Activated CD8-positive, alpha-beta T cell treated with anti-CD3 and anti-CD28 coated beads, Interleukin-2, amount 10 ng/mL, durations not matched to agents 7 days and 5 days (primary cell): ENCODE measurements at regions of chr20 and their contacts with region 1.

Region 1: GRCh38 chr20:62953839-62954703 is 1.6 kb downstream of the SLC17A9 start:
- DNase-seq: peak; percentile 93
- ATAC-seq: peak; percentile 89
- H3K4me3 Mint-ChIP-seq: peak overlapping the region; percentile 82
- H3K27ac Mint-ChIP-seq: peak overlapping the region; percentile 94
- H3K4me1 Mint-ChIP-seq: peaks cover 50% of the 10 kb centered on the region
- H3K27me3 Mint-ChIP-seq: no peaks in the 10 kb centered on the region

Region 2: DNA sequence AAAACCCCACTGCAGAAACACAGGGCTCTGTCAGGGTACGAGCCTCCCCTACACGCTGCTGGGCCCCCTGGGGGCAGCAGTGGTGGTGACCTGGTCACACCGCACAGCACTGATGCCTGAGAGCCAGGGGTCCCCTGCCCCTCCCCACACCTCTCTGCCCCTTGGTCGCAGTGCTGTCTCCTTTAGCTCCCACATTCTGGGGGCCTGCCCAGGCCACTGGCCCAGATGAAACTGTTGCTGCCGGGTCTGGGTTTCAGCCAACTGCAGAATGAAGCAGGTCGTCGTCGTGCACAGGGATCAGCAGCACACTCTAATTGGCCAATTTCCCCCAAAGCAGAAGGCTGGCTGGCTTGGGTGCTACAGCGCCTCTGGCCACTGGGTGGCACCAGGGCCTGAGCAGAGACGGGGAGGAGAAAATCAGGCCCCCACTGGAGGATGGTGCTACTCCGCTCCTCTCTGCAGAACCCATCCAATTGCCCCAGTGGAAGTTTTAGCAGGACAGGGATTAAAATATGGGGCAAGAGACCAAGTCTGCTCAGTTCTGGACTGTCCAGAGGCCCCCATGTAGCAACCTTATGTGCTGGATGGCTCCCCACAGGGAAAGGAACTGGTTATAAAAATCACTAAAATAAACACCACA is 53.9 kb before region 1 on chr20:
- CTCF ChIA-PET with region 1: interaction called, 14 read pairs
- POLR2A ChIA-PET with region 1: no interaction called
- DNase-seq: peak; percentile 84
- ATAC-seq: peak; percentile 95
- H3K4me3 Mint-ChIP-seq: no peak overlapping the region
- H3K27ac Mint-ChIP-seq: peak overlapping the region; percentile 80
- H3K4me1 Mint-ChIP-seq: peaks cover 51% of the 10 kb centered on the region
- H3K27me3 Mint-ChIP-seq: no peaks in the 10 kb centered on the region

Region 3: DNA sequence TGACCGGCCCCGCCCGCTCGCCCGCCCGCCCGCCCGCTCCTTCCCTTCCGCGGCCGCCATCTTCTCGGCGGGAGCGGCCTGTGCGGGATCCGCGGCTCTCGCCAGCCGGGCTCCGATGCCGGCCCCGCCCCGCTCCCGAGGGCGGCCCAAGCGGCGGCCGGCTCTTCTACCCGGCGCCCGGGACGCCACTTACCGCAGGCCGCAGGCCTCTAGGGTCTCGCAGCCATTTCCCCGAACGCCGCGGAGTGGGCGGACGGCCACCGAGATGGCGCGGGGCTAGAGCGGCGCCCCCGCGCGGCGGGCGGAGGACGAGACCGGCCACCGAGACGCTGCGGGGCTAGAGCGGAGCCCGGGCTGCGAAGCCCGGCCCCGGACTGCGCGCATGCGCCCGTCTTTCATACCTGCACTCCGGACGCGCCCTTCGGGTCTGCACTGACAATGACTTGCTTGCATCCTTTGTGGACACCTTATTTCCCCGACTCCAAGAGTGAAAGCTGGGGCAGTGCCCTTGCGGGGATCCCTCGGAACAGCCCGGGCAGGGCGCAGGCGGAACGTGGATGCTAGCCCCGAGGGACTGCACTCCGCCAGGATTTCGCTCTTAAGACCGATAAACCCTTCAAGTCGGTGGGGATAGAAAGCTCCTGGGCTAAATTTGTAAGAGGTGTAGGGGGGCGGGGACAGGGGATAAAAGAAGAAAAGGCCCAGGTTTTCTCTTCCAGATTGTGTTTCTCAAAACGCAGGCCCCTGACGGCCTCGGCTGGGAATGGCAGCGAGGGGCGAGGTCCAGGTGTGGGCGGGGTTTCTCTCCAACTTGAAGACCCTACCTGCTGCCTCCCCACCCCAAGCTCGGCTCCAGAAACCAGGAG is 27.6 kb before region 1 on chr20 and contains the start of gene DIDO1:
- CTCF ChIA-PET with region 1: interaction called, 7 read pairs
- POLR2A ChIA-PET with region 1: interaction called, 15 read pairs
- DNase-seq: peak; percentile 89
- ATAC-seq: peak; percentile 76
- H3K4me3 Mint-ChIP-seq: peak within 1 kb of the TSS; percentile 92
- H3K27ac Mint-ChIP-seq: peak within 1 kb of the TSS; percentile 96
- H3K4me1 Mint-ChIP-seq: peaks cover 72% of the 10 kb centered on the region
- H3K27me3 Mint-ChIP-seq: no peaks in the 10 kb centered on the region
- total RNA-seq, gene DIDO1: 69.6 to 74.0 TPM

Region 4: DNA sequence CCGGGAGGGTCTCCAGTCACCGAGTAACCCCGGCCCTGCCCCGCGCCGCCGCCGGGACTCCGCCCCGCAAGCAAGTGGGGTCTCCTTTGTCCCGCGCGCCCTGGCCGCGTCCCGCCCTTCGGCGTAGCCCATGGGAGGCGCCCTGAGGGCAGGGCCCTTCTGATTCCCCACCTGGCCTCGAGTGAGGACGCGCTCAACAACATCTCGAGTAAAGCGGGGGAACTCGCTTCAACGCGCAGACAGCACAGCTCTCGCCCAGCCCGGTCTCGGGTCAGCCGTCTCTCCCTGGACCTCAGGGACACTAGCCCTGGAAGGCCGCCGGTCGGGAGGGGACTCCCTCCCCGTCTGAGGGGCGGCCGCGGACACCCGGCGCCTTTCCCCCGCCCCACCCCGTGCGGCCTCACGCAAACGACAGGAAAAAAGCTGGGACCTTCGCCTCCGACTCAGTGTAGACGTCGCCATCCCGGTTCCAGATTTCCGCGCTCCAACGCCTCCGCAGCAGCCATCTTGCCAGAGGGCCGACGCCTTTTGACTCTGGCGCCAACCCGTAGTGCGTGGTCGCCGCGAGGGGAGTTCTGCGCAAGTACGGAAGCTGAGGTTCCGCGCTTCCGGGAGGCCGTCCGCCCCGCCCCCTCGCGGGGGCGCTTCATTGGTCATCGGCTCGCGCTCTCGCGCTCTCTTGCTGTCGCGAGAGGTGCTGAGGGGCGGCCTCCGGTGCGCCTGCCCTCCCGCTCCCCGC is 16.5 kb before region 1 on chr20:
- CTCF ChIA-PET with region 1: interaction called, 7 read pairs
- POLR2A ChIA-PET with region 1: interaction called, 25 read pairs
- DNase-seq: peak; percentile 97
- ATAC-seq: peak; percentile 90
- H3K4me3 Mint-ChIP-seq: no peak overlapping the region
- H3K27ac Mint-ChIP-seq: peak overlapping the region; percentile 95
- H3K4me1 Mint-ChIP-seq: peaks cover 37% of the 10 kb centered on the region
- H3K27me3 Mint-ChIP-seq: no peaks in the 10 kb centered on the region

Region 5: DNA sequence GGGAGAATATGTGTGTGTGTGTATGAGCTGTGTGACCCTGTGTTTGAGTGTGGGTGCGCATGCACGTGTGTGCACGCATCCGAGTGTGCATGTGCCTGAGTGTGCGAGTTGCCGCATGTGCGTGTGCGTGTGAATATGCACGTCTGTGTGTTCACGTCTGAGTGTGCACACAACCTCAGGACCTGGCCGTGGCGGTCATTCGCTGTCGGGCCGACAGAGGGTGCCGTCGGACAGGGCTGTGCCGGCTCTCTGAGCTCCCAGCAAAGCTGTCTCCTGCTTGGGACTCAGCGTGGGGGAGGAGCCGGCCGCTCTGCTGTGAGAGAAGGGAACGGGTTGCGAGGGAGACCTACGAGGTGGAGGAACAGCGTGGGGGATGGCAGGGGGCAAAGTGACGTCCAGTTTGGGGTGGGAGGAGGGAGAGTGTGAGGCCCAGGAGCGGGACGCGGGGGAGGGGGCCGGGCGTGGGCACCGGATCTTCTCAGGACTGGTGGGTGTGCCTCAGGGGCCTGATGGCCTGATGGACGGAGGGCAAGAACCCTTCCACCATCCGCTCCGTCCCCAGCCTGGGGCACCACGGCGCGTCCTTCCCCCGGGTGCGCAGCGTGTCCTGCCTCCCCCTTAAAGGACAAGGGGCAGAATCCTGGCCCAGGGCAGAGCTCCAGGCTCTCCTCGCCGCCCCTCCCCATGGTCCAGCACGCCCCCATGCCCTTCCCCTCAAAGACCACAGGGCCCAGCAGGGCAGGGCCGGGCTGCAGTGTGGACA is 18.4 kb after region 1 on chr20:
- CTCF ChIA-PET with region 1: interaction called, 15 read pairs
- POLR2A ChIA-PET with region 1: interaction called, 3 read pairs
- DNase-seq: peak; percentile 90
- ATAC-seq: peak; percentile 97
- H3K4me3 Mint-ChIP-seq: peak overlapping the region; percentile 19
- H3K27ac Mint-ChIP-seq: no peak overlapping the region
- H3K4me1 Mint-ChIP-seq: peaks cover 12% of the 10 kb centered on the region
- H3K27me3 Mint-ChIP-seq: peaks cover 42% of the 10 kb centered on the region

Region 6: GRCh38 chr20:63009045-63009961 is 55.2 kb after region 1 on chr20:
- CTCF ChIA-PET with region 1: interaction called, 13 read pairs
- POLR2A ChIA-PET with region 1: no interaction called
- DNase-seq: peak; percentile 87
- ATAC-seq: peak; percentile 73
- H3K4me3 Mint-ChIP-seq: peak overlapping the region; percentile 12
- H3K27ac Mint-ChIP-seq: no peak overlapping the region
- H3K4me1 Mint-ChIP-seq: peaks cover 30% of the 10 kb centered on the region
- H3K27me3 Mint-ChIP-seq: peaks cover 58% of the 10 kb centered on the region